Head of caudate nucleus (tissue), 42 donors: ENCODE measurements at regions of chr3 and their contacts with region 1.

Region 1: DNA sequence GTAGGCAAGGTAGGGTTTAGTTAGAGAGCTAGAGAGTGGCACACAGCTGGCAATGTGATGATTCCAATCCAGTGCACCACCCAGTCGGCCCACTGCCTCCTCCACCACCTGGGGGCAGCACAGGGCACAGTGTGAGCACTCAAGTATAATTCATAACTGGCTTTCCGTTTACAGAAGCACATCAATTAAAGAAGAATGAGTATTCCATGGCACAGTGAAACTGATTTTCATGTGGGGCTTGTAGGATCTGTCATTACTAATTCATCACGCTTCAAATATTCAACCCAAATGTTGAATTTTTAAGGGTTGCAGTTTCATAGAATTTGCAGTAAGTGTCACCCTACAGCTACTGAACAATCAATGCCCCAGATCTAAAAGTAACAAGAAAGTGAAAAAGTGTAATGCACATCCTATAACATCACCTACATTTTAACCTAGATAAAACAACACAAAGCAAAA is 149.9 kb downstream of the IGSF11 start:
- DNase-seq: peak; percentile 68 to 95 (median 88)

Region 2: DNA sequence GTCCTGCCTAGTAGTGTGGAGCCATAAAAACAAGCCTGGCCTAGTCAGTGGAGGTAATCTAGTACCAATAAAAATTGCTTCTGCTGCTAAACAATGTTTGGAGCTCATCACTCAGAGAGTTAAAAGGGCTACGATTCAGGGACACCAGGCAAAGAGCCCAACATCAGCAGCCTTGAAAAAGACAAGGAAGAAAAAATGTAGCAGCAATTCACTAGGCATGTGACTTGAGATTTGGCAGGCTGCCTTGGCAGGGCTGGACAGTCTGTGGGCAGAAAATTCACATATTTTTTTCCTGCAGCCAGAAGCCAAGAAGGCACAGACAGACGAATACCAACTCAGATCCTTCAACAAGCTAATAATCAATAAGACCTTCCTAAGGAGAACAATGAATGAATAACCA is 102.7 kb after region 1 on chr3:
- intact Hi-C with region 1: loop called (anchors 5 kb)
- DNase-seq: peak; percentile 60 to 98 (median 88)

Region 3: GRCh38 chr3:119034256-119035013 is 149.7 kb after region 1 on chr3 and contains the start of gene IGSF11:
- intact Hi-C with region 1: loop called (anchors 2 kb)
- DNase-seq: peak; percentile 79 to 97 (median 92)

Region 4: GRCh38 chr3:119098619-119099222 is 213.9 kb after region 1 on chr3:
- intact Hi-C with region 1: loop called (anchors 2 kb)
- DNase-seq: peak in 13 of 42 donors; percentile 9 to 64 (median 34)

Region 5: DNA sequence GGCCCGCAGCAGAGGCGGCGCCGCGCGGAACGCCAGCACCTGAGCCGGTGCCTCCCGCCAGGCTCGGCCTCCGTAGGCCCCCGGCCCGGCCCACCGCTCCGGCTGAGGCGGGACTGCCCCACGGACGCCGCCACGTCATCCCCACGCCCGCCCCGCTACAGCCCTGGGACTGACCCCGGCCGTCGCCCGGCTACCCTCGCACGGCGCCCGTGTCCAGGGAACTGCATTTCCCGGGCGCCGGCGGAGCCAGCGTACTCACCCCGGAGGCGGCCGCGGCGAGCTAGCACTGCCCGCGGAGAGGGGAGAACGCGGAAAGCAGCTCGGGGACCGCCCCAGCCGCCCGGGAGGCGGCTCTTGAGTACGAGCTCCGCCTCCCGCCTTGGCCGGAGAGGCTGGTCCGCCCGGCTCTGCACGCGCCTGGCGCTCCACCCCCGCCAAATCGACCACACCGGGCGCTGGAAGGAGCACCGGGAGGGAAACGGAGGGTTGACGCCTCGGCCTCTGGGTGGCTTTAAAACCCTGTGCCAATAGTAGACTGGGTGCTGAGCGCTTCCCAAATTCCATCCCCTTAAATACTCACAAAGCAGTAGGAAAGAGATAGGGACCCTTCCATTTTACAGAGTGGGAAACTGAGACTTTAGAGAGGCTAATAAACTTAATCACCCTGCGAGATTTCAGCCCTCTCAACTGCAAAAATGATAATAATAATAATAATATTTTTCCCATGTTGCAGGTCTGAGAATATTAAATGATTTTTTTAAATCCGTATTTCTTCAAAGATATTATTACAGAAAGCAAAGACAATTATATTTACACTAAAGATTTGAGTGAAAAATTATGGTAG is 356.0 kb after region 1 on chr3 and contains the start of gene B4GALT4:
- intact Hi-C with region 1: loop called (anchors 5 kb)
- DNase-seq: peak; percentile 46 to 92 (median 84)